A673 (cell line): ENCODE measurements at regions of chr1 and their contacts with region 1.

Region 1: DNA sequence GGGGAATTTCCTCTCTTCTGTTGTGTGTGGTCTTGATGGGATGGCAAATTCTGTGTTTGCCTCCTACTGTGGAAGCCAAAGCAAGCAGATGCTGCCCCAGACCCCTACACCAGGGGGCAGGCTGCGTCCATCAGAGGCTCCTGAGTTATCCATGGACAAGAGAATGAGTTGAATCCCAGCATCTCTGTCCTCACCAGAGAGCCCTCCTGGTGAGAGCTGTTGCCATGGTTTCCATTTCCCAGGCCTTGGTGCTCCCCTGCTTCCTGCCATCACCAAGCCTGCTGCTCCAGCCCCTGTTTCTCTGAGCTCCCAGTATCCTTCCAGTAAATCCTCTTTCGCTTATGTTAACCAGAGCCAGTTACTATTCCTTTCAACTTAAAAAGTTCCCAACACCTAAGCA is 20.4 kb upstream of the GNG12 start:
- DNase-seq: peak; percentile 83
- H3K4me3 ChIP-seq: no peak overlapping the region
- H3K27ac ChIP-seq: no peak overlapping the region
- H3K4me1 ChIP-seq: no peaks in the 10 kb centered on the region
- H3K27me3 ChIP-seq: no peaks in the 10 kb centered on the region
- CTCF ChIP-seq: peak; percentile 77

Region 2: GRCh38 chr1:67880056-67880601 is 26.4 kb after region 1 on chr1:
- CTCF ChIA-PET with region 1: no interaction called
- POLR2A ChIA-PET with region 1: no interaction called
- intact Hi-C with region 1: no loop called
- DNase-seq: no peak
- H3K4me3 ChIP-seq: no peak overlapping the region
- H3K27ac ChIP-seq: no peak overlapping the region
- H3K4me1 ChIP-seq: no peaks in the 10 kb centered on the region
- H3K27me3 ChIP-seq: no peaks in the 10 kb centered on the region
- CTCF ChIP-seq: no peak

Region 3: GRCh38 chr1:68010090-68010489 is 156.4 kb after region 1 on chr1:
- CTCF ChIA-PET with region 1: interaction called, 6 read pairs
- POLR2A ChIA-PET with region 1: no interaction called
- intact Hi-C with region 1: loop called (anchors 2 kb)
- DNase-seq: peak; percentile 21
- H3K4me3 ChIP-seq: no peak overlapping the region
- H3K27ac ChIP-seq: no peak overlapping the region
- H3K4me1 ChIP-seq: peaks cover 6% of the 10 kb centered on the region
- H3K27me3 ChIP-seq: no peaks in the 10 kb centered on the region
- CTCF ChIP-seq: peak; percentile 42

Region 4: DNA sequence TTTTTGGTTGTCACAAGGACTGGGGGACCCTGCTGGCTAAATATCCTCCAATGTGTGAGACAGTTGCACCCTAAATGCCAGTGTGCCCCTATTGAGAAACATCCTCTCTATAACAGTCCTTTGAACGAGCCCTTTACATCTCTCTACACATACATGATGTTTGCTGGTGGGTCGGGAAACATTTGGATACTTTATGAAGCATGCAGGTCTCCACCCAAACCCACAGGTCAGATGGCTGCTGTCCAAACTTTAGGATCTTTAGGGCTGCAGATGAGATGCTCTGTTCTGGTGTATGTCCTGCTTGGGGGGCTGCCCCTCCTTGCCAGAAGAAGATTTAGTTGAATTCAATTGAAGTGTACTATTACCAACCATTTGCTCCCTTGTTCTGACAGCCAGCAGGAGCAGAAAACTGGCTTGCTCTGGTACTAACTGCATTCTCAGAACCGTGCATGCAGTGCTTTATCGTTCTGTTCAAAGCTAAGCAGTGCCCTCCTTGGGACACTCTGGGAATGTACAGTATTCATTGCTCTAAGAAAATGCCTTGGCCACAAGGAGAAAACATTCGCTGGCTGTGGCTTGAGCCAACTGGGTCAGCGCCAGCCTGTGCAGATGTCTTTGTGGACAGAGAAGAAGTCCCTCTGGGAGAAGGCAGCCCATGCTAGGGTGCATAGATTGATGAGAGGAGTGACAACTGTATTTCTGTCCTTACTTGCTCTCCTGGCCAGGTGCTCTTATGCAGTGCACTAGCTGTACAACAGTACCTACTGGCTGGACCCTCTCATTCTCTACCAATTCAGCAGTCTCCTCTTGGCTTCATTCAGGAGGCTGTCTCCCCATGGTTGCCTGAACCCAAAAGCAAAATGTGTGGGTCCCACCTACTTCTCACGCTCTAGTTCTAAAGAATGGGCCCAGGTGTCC is 258.1 kb after region 1 on chr1:
- CTCF ChIA-PET with region 1: interaction called, 5 read pairs
- POLR2A ChIA-PET with region 1: no interaction called
- intact Hi-C with region 1: loop called (anchors 1 kb)
- DNase-seq: peak; percentile 65
- H3K4me3 ChIP-seq: no peak overlapping the region
- H3K27ac ChIP-seq: no peak overlapping the region
- H3K4me1 ChIP-seq: no peaks in the 10 kb centered on the region
- H3K27me3 ChIP-seq: no peaks in the 10 kb centered on the region
- CTCF ChIP-seq: peak; percentile 64

Region 5: DNA sequence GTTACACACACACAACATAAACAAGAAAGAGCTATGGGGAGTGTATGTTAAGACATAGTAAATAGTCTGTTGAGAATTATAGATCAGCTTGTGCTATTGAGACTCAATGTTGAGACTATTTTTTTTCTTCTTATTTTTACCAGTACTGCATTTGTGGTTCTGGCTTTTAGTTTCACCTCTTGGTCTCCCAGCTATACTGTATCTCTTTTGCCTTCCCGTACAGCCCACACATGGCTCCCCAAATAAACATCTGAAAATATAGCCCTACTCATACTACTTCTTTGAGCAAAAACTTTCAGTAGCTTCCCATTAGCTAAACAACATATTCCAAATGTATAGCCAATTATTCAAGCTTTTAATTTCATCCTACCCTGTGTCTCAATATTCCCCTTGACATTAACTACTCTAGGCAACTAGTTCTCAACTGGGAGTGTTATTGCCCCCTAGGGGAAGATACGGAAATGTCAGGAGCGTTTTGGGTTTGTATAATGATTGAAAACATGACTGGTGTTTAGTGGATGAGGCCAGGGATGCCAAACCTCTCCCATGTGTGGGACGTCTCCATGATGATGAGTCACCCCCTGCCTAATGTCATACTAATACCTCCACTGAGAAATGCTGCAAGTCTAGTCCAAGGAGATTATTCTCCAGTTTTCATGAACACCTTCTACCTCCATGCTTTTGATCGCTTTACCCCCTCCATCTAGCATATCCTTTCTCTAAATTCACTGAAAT is 589.3 kb after region 1 on chr1:
- CTCF ChIA-PET with region 1: no interaction called
- POLR2A ChIA-PET with region 1: no interaction called
- intact Hi-C with region 1: loop called (anchors 10 kb)
- DNase-seq: peak; percentile 79
- H3K4me3 ChIP-seq: no peak overlapping the region
- H3K27ac ChIP-seq: no peak overlapping the region
- H3K4me1 ChIP-seq: peaks cover 3% of the 10 kb centered on the region
- H3K27me3 ChIP-seq: no peaks in the 10 kb centered on the region
- CTCF ChIP-seq: peak; percentile 82